ENCODE measurements at regions of chr3 and their contacts with region 1.

Region 1: GRCh38 chr3:185900226-185900625 is 37.6 kb downstream of the TRA2B start:
- DNase-seq: peak; percentile 89
- ATAC-seq: peak; percentile 98
- H3K4me3 ChIP-seq: no peak overlapping the region
- H3K27ac ChIP-seq: no peak overlapping the region
- H3K4me1 ChIP-seq: no peaks in the 10 kb centered on the region
- H3K27me3 ChIP-seq: no peaks in the 10 kb centered on the region
- CTCF ChIP-seq: no peak

Region 2: DNA sequence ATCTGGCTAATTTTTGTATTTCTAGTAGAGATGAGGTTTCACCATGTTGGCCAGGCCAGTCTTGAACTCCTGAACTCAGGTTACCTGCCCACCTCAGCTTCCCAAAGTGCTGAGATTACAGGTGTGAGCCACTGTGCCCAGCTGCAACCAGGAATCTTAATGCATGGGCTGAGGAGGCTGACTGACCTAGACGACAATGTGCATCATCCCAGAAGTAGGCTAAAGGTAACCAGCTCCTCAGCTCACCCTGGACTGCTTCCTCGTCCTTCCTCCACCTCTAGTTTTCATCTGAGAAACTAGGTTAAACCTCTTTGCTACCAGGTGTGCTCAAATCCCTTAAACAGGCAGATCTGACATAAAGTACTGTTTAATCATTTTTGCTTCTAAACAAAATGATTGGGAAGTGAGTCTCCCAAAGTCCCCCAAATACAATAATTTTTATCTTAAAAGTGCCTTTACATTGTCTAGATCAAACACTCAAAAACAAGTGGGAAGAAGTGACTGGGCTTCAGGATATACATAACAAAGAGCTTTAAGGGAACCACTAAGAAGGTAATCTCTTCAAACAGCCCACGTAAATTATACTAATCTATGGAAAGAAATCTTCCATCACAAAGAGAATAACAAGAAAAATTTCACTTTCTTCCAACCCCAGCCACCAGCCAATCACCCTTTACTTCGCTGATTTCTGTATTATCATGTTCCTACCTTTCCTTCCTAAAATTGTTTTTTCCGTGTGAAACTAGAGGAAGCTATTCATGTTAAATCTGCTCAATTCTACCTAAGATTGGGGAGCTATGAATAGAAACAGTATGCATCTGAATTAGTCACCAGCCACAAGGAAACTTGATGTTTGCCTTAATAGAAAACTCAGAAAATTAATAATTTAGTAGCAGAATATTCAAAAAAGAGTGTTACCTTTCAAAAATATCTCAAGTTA is 110.1 kb before region 1 on chr3:
- CTCF ChIA-PET with region 1: interaction called, 11 read pairs
- POLR2A ChIA-PET with region 1: no interaction called
- in situ Hi-C with region 1: no loop called
- intact Hi-C with region 1: no loop called
- DNase-seq: no peak
- ATAC-seq: no peak
- H3K4me3 ChIP-seq: no peak overlapping the region
- H3K27ac ChIP-seq: no peak overlapping the region
- H3K4me1 ChIP-seq: peaks cover 28% of the 10 kb centered on the region
- H3K27me3 ChIP-seq: no peaks in the 10 kb centered on the region
- CTCF ChIP-seq: no peak

Region 3: GRCh38 chr3:185837414-185837813 is 62.8 kb before region 1 on chr3:
- CTCF ChIA-PET with region 1: no interaction called
- POLR2A ChIA-PET with region 1: no interaction called
- in situ Hi-C with region 1: no loop called
- intact Hi-C with region 1: loop called (anchors 5 kb)
- DNase-seq: no peak
- ATAC-seq: peak; percentile 62
- H3K4me3 ChIP-seq: no peak overlapping the region; a peak in 1 of 4 replicates
- H3K27ac ChIP-seq: no peak overlapping the region
- H3K4me1 ChIP-seq: no peaks in the 10 kb centered on the region; the same call in 1 of the 2 replicates
- H3K27me3 ChIP-seq: no peaks in the 10 kb centered on the region
- CTCF ChIP-seq: no peak